CD4-positive, alpha-beta T cell (primary cell): ENCODE measurements at regions of chr19 and their contacts with region 1.

Region 1: DNA sequence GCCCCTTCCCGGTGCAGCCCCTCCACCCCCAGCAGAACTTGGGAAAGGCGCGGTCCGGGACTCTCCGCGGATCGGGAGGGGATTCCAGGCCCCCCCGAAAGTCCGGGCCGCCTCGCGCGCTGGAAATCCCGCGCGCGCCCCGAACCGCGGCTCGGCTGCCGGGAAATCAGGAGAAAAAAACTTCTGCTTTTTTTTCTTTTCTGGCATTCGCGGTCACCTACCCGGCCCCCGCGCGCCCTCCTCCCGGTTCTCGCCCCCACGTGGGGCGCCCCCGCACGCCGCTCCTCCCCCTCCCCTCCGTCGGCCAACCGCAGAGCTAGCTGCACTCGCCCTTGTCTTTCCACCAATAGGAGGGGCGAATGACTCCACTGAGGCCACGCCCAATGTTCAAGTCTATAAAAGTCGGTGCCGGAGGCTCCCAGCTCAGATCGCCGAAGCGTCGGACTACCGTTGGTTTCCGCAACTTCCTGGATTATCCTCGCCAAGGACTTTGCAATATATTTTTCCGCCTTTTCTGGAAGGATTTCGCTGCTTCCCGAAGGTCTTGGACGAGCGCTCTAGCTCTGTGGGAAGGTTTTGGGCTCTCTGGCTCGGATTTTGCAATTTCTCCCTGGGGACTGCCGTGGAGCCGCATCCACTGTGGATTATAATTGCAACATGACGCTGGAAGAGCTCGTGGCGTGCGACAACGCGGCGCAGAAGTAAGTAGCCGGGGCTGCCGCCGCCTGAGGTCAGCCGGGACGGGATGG is at the start of gene GADD45B:
- DNase-seq: peak; percentile 96 to 98 (median 98)
- ATAC-seq: peak; percentile 56
- H3K4me3 ChIP-seq: peak within 1 kb of the TSS; percentile 86
- H3K4me3 Mint-ChIP-seq: peak within 1 kb of the TSS; percentile 100
- H3K27ac ChIP-seq: peak within 1 kb of the TSS; percentile 37 to 80
- H3K27ac Mint-ChIP-seq: peak within 1 kb of the TSS; percentile 91
- H3K4me1 ChIP-seq: peaks cover 45% of the 10 kb centered on the region
- H3K4me1 Mint-ChIP-seq: peaks cover 25% of the 10 kb centered on the region
- H3K27me3 ChIP-seq: no peaks in the 10 kb centered on the region
- H3K27me3 Mint-ChIP-seq: peaks cover 4% of the 10 kb centered on the region
- CTCF ChIP-seq: no peak
- total RNA-seq, gene GADD45B: 284 to 285 TPM

Region 2: DNA sequence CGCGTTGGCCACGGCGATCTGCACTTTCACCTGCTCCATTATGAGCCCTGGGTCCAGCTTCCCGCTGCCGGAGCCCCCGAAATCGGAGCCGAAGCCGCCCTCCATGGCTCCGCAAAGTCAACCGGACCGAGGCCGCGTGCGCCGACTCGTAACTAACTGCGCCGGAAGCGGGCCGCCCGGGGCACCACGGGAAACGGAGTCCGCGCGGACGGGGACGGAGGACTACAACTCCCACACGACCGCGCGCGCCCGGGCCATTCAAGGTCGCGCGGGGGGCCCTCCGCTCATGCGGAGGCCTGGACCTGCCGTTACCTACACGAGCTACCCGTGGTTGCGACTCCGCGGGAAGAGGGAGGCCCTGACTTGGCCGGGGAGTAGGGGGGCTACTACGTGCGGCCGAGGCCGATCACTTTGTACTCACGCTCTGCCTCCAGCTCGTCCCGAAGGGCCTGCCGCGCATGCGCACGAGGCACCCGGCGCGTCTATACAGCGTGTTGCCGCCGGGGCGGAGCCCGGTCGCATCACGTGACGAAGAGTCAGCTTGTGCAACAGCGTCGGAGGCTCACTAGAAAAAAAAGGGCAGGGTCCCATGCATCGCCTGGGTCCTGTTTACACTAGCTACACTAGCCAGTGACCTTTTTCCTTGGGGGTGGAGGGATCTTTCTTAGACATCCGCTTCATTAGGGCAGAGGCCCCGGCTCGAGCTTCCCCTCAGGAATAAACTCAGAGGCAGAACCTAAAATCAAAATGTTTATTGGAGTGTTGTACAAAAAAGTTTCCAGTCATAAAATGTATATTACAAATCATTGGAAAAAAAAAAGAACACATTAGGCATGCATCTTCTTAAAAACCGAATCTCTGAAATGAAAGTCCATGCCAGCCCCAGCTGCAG is 48.2 kb before region 1 on chr19 and contains the start of gene TIMM13:
- CTCF ChIA-PET with region 1: no interaction called
- POLR2A ChIA-PET with region 1: interaction called, 34 read pairs
- intact Hi-C with region 1: no loop called
- DNase-seq: peak; percentile 92 to 99 (median 96)
- ATAC-seq: peak; percentile 93
- H3K4me3 ChIP-seq: peak within 1 kb of the TSS; percentile 86
- H3K4me3 Mint-ChIP-seq: peak within 1 kb of the TSS; percentile 92
- H3K27ac ChIP-seq: peak within 1 kb of the TSS; percentile 91 to 98
- H3K27ac Mint-ChIP-seq: peak within 1 kb of the TSS; percentile 93
- H3K4me1 ChIP-seq: peaks cover 31% of the 10 kb centered on the region
- H3K4me1 Mint-ChIP-seq: peaks cover 15% of the 10 kb centered on the region
- H3K27me3 ChIP-seq: no peaks in the 10 kb centered on the region
- H3K27me3 Mint-ChIP-seq: no peaks in the 10 kb centered on the region
- CTCF ChIP-seq: no peak
- total RNA-seq, gene TIMM13: 17.3 to 22.3 TPM

Region 3: DNA sequence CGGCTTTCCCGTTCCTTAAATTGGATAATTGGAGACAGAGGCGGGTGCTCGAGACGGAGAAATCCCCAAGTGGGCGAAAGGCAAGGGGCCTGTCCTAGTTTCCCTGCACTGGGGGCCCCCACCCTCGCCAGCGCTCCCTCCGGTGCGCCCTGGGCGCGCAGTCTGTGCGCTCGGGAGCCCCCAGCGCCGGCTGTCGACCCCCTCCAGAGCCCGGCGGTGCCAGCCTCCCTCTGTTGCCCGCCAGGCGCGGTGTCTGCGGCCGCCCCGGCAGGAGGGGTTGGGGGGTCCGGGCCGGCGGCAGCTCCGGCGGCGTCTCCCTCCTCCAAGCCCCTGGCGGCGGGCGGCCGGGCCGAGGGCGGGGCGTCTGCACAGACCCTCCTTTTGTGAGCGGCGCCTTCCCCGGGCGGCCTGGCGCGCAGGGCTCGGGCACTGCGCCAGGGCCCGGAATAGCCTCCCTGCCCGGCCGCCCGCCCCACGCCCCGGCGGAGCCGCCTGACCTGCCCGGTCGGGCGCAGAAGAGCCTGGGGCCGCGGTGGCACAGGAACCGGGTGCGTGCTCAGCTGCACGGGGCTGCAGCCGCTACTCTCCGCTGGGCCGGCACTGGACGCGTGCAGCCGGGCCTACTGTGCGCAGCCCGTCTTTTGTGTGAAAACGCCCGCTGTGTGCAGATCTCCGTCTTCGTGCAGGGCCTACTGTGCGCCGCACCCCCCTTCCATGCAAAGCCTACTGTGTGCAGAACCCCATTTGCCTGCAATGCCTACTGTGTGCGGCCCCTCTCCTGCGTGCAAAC is 13.3 kb after region 1 on chr19:
- CTCF ChIA-PET with region 1: no interaction called
- POLR2A ChIA-PET with region 1: interaction called, 47 read pairs
- intact Hi-C with region 1: no loop called
- DNase-seq: peak in 1 of 14 experiments; percentile 23
- ATAC-seq: peak; percentile 29
- H3K4me3 ChIP-seq: no peak overlapping the region
- H3K4me3 Mint-ChIP-seq: peak overlapping the region; percentile 57
- H3K27ac ChIP-seq: no peak overlapping the region
- H3K27ac Mint-ChIP-seq: no peak overlapping the region
- H3K4me1 ChIP-seq: peaks cover 31% of the 10 kb centered on the region
- H3K4me1 Mint-ChIP-seq: peaks cover 17% of the 10 kb centered on the region
- H3K27me3 ChIP-seq: peaks cover 24 to 30% of the 10 kb centered on the region in 2 experiments
- H3K27me3 Mint-ChIP-seq: peaks cover 43% of the 10 kb centered on the region
- CTCF ChIP-seq: no peak

Region 4: GRCh38 chr19:2532252-2533071 is 56.6 kb after region 1 on chr19:
- CTCF ChIA-PET with region 1: interaction called, 3 read pairs
- POLR2A ChIA-PET with region 1: interaction called, 11 read pairs
- intact Hi-C with region 1: loop called in 1 of 2 experiments (anchors 10 kb)
- DNase-seq: no peak
- ATAC-seq: no peak
- H3K4me3 ChIP-seq: no peak overlapping the region
- H3K4me3 Mint-ChIP-seq: no peak overlapping the region
- H3K27ac ChIP-seq: no peak overlapping the region
- H3K27ac Mint-ChIP-seq: no peak overlapping the region
- H3K4me1 ChIP-seq: peaks cover 8% of the 10 kb centered on the region
- H3K4me1 Mint-ChIP-seq: peaks cover 18% of the 10 kb centered on the region
- H3K27me3 ChIP-seq: no peaks in the 10 kb centered on the region
- H3K27me3 Mint-ChIP-seq: no peaks in the 10 kb centered on the region
- CTCF ChIP-seq: no peak

Region 5: DNA sequence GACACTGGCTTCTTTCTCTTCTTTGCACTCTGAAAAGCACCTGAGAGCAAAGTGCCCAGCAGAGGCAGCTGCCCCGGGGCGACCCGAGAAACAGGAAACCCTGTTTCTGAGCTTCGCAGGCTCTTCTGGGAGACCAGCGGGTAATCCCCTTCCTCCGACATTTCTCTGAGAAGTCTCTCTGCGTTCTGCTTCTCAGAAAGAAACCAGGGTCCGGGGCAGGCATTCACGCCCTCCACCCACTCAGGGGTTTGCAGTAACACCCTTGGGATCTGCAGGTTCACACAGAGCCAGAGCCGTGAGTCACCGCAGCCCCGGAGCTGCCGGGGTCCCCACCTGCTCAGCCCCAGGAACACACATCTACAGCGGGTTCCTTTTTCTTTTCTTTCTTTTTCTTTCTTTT is 86.0 kb after region 1 on chr19:
- CTCF ChIA-PET with region 1: interaction called, 4 read pairs
- POLR2A ChIA-PET with region 1: interaction called, 62 read pairs
- intact Hi-C with region 1: loop called (anchors 5 kb)
- DNase-seq: peak; percentile 41 to 86 (median 63)
- ATAC-seq: peak; percentile 95
- H3K4me3 ChIP-seq: peak overlapping the region; percentile 72
- H3K4me3 Mint-ChIP-seq: peak overlapping the region; percentile 95
- H3K27ac ChIP-seq: peak overlapping the region; percentile 63 to 77
- H3K27ac Mint-ChIP-seq: peak overlapping the region; percentile 94
- H3K4me1 ChIP-seq: peaks cover 20% of the 10 kb centered on the region
- H3K4me1 Mint-ChIP-seq: peaks cover 15% of the 10 kb centered on the region
- H3K27me3 ChIP-seq: no peaks in the 10 kb centered on the region
- H3K27me3 Mint-ChIP-seq: no peaks in the 10 kb centered on the region
- CTCF ChIP-seq: no peak

Region 6: GRCh38 chr19:2610637-2611482 is 135.0 kb after region 1 on chr19:
- CTCF ChIA-PET with region 1: interaction called, 55 read pairs
- POLR2A ChIA-PET with region 1: interaction called, 272 read pairs
- intact Hi-C with region 1: loop called (anchors 1 kb)
- DNase-seq: peak; percentile 81 to 95 (median 87)
- ATAC-seq: peak; percentile 45
- H3K4me3 ChIP-seq: peak overlapping the region; percentile 59
- H3K4me3 Mint-ChIP-seq: peak overlapping the region; percentile 83
- H3K27ac ChIP-seq: no peak overlapping the region
- H3K27ac Mint-ChIP-seq: peak overlapping the region; percentile 30
- H3K4me1 ChIP-seq: peaks cover 44% of the 10 kb centered on the region
- H3K4me1 Mint-ChIP-seq: peaks cover 44% of the 10 kb centered on the region
- H3K27me3 ChIP-seq: no peaks in the 10 kb centered on the region
- H3K27me3 Mint-ChIP-seq: peaks cover 4% of the 10 kb centered on the region
- CTCF ChIP-seq: peak; percentile 98